ENCODE measurements at regions of chr2 and their contacts with region 1.

Region 1: GRCh38 chr2:148613231-148614013 is 31.1 kb upstream of the EPC2 start:
- DNase-seq: no peak
- H3K4me3 ChIP-seq: no peak overlapping the region
- H3K27me3 ChIP-seq: no peaks in the 10 kb centered on the region
- CTCF ChIP-seq: no peak

Region 2: GRCh38 chr2:148475626-148476025 is 137.8 kb before region 1 on chr2:
- CTCF ChIA-PET with region 1: no interaction called
- POLR2A ChIA-PET with region 1: interaction called, 12 read pairs
- DNase-seq: no peak
- H3K4me3 ChIP-seq: no peak overlapping the region
- H3K27me3 ChIP-seq: no peaks in the 10 kb centered on the region
- CTCF ChIP-seq: no peak

Measured in BJ (cell line).